ENCODE measurements at regions of chr2 and their contacts with region 1.

Region 1: DNA sequence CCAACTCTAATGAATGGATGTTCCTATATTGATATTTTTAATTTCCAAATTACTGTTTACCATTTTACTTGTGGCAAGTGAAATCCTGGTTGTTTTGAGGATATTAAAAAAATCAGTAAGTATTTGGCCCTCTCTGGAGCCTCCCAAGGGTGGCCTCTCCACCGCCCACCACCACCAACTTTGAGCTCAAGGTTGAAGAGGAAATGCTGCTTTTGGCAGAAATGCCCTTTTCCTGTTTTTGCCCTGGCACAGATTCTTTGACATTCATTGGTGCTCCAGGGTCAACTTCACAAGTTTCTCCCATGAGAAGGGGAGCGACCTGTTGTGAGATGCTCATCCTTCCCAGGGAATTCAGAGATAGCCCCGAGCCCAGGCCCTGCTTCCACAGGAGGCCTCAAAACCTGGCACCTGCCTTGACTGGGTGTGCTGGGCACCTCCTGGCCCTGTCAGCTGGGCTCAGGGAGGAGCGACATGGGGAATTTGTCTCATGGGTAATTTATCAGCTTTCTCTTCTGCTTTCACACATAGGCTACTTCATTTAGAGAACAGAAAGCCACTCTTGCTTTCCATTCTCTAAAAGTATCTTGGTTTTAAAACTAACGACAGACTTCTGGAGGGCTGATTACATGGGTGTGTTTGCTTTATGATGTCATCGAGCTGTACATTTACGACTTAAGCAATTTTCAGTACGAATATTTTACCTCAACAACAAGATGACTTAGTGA is 6.9 kb downstream of the CD8A start:
- DNase-seq: no peak
- H3K4me3 ChIP-seq: no peak overlapping the region
- H3K27ac ChIP-seq: no peak overlapping the region
- H3K4me1 ChIP-seq: peaks cover under 1 to 1% (median under 1%) of the 10 kb centered on the region in 4 donors
- H3K27me3 ChIP-seq: peaks cover 13% of the 10 kb centered on the region
- CTCF ChIP-seq: no peak
- EP300 ChIP-seq: no peak
- POLR2A ChIP-seq: no peak

Region 2: DNA sequence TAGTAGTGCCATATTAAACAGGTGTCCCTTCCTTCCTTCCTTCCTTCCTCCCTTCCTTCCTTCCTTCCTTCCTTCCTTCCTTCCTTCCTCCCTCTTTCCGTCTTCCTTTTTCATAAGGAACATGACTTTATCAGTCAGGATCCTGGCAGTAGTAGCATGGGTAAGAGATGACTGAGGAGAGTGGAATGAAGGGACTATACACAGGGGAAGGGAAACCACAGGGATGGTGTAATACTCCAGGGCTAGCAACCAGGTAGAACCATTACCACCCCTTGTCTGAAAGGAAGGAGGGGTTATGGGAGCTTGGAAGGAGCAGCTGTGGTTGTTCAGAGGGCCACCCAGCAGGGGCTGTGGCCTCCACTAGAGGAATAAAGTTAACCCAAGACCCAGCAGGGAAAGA is 365.8 kb before region 1 on chr2:
- in situ Hi-C with region 1: no loop called
- intact Hi-C with region 1: no loop called
- DNase-seq: no peak
- H3K4me3 ChIP-seq: no peak overlapping the region
- H3K27ac ChIP-seq: no peak overlapping the region
- H3K4me1 ChIP-seq: no peaks in the 10 kb centered on the region
- H3K27me3 ChIP-seq: peaks cover 2% of the 10 kb centered on the region
- CTCF ChIP-seq: no peak
- EP300 ChIP-seq: no peak
- POLR2A ChIP-seq: no peak

Region 3: DNA sequence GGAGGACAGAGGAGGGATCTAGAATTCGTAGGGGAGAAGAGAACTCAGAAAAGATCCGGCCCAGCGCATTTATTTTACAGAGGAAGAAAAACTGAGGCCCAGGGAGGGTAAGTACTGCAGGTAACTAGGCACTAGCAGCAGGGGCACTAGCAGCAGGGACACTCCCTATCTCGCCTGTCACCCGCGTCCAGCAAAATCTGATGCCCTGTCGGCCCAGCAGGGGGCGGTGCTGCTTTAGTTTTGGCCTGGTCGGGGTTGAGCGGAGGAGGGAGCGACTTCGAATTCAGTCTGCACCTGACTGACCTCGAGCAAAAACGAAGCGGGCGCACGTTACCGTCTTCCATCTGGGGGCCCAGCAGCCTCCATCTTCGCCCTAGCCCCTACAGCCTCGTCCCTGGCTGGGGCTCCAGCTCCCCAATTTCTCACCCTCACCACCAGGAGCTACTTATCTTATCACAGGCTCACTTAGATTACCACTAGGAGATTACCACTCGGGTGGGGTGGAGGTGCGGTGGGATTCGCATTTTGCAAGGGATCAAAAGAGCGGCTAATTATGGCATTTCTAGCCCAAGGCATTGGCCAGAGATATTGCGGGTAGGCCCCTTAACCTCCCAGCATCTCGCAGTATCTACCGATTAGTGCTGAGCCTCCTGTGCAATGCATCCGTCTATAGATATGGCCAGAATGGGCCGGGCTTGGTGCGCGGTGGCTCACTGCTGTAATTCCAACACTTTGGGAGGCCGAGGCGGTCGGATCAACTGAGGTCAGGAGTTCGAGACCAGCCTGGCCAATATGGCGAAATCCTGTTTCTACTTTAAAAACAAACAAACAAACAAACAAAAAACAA is 24.8 kb after region 1 on chr2:
- in situ Hi-C with region 1: no loop called
- intact Hi-C with region 1: loop called (anchors 1 kb)
- DNase-seq: peak; percentile 93
- H3K4me3 ChIP-seq: peak overlapping the region; percentile 13 to 56 (median 33)
- H3K27ac ChIP-seq: peak overlapping the region in 3 of 4 donors; percentile 5 to 27 (median 26)
- H3K4me1 ChIP-seq: peaks cover 6 to 23% (median 21%) of the 10 kb centered on the region in 4 donors
- H3K27me3 ChIP-seq: peaks cover 67% of the 10 kb centered on the region
- CTCF ChIP-seq: peak; percentile 87 to 96 (median 89)
- EP300 ChIP-seq: no peak
- POLR2A ChIP-seq: no peak

Region 4: DNA sequence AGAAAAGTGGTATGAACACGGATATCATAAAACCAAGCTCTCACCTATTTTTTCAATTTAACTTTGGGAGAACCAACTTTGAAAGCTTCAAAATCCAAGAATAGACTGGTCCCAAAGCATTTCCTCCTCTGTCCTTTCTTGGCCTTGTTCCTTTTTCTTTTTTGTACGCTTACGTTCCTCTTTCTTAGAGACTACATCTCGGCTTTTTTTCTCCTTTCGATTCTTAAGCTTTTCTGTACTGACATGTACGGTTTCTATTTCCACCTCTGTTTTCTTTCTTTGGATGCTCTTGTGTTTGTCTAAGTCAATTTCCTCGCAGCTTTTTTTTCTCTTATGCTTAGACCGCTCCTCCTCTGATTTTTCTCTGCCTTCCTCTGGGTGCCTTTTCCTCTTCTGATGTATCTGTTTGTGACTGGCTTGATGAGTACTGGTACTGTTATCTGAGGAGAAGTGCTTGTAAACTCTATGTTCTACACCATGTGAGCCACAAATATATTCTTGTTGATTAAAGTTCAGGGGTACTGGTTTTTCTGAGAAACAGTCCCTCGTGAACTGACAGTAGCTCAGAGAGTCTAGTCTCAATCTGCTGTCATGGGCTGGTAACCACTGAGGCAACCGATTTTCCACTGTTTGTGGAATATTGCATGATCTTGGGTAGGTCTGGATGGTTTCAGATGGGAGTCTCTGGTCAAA is 1244.1 kb after region 1 on chr2:
- in situ Hi-C with region 1: no loop called
- intact Hi-C with region 1: no loop called
- DNase-seq: no peak
- H3K4me3 ChIP-seq: no peak overlapping the region
- H3K27ac ChIP-seq: peak overlapping the region in 1 of 4 donors; percentile 20
- H3K4me1 ChIP-seq: no peaks in the 10 kb centered on the region
- H3K27me3 ChIP-seq: no peaks in the 10 kb centered on the region
- CTCF ChIP-seq: no peak
- EP300 ChIP-seq: no peak
- POLR2A ChIP-seq: no peak

Region 5: GRCh38 chr2:88638743-88639142 is 1855.0 kb after region 1 on chr2:
- in situ Hi-C with region 1: no loop called
- intact Hi-C with region 1: no loop called
- DNase-seq: no peak
- H3K4me3 ChIP-seq: no peak overlapping the region
- H3K27ac ChIP-seq: no peak overlapping the region
- H3K4me1 ChIP-seq: no peaks in the 10 kb centered on the region
- H3K27me3 ChIP-seq: peaks cover 11% of the 10 kb centered on the region
- CTCF ChIP-seq: no peak
- EP300 ChIP-seq: no peak
- POLR2A ChIP-seq: no peak